ENCODE measurements at regions of chr1 and their contacts with region 1.

Region 1: GRCh38 chr1:153192697-153193096 is 10.5 kb upstream of the LELP1 start:
- DNase-seq: peak; percentile 57
- H3K27ac ChIP-seq: no peak overlapping the region
- CTCF ChIP-seq: peak; percentile 54

Region 2: DNA sequence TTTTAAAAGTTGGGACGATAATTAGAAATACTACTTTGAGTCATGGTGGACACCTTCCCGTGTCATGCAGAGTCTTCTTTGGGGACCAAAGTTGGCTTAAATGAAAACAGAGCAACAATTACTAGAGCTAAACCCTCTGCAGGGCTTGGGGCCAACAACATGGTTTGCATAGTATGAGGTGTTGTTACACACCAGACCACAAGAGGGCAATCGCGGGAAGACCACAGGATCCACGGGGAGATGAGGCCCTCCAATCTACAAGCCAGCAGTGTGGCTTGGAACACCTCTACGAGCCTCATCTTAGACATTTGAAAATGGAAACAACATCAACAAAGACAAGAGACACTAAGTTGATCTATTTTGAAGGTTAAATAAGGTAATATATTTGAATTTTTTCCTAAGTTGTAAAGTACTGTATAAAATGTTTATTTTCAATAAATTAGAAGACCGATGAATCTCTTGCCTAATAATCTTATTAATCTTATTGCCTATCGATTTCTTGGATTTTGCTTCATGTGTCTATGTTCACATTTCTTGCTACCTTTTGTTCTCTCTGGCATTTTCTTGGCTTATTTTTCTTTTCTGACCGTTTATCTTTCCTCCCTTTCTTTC is 322.8 kb before region 1 on chr1:
- CTCF ChIA-PET with region 1: interaction called, 11 read pairs
- POLR2A ChIA-PET with region 1: no interaction called
- DNase-seq: peak; percentile 78
- H3K27ac ChIP-seq: no peak overlapping the region
- CTCF ChIP-seq: peak; percentile 86

Region 3: GRCh38 chr1:152926091-152926490 is 266.6 kb before region 1 on chr1:
- CTCF ChIA-PET with region 1: interaction called, 20 read pairs
- POLR2A ChIA-PET with region 1: no interaction called
- DNase-seq: peak; percentile 63
- H3K27ac ChIP-seq: no peak overlapping the region
- CTCF ChIP-seq: peak; percentile 33; the same call in 1 of the 2 replicates

Region 4: DNA sequence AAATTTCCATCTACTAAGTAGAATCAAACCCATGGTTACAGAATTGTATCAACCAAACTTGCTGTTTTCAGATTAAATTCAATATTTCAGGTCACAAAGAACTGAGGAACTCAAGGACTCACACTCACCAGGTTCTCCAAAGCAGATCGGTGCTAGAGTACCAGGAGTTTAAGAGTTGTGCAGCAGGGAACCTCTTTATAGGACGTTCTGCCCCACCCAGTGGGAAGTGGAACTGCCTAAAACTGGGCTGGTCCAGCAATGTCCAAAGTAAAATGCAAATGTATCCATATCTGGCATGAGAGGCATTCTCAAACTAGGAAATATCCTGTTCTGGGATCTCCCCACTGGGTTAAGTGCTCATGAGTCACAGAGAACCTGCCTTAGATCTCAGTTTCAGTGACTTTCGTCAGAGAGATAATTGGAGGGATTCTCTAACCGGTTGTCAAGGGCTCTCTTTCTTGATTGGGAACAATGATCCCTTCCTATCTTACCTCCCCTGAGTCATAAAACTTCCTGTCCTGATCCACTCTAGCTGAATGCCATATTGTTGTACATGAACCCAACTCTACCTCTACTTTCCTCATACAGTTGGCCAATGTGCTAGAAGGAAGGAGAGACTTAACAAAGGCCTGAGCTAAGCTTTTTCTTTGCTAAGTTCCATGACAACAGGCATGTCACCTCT is 151.6 kb before region 1 on chr1 and contains the start of gene SPRR2D:
- CTCF ChIA-PET with region 1: no interaction called
- POLR2A ChIA-PET with region 1: no interaction called
- DNase-seq: no peak
- H3K27ac ChIP-seq: no peak within 1 kb of the TSS
- CTCF ChIP-seq: no peak

Region 5: DNA sequence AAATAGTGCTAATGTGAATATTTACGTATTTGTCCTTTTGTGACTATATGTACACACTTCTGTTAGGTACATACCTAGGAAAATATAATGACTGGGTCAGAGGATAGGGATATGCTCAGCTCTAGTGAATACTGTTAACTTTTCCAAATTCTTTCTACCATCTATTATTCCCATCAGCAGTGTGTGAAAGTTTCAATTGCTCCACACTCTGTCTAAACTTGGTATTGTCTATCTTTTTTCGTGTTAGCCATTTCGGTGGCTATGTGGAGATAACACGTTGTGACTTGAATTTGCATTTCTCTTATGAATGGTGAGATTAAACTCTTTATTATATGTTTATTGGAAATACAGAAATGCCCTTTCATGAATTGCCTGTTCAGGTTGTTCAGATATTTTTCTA is 12.1 kb before region 1 on chr1:
- CTCF ChIA-PET with region 1: no interaction called
- POLR2A ChIA-PET with region 1: no interaction called
- DNase-seq: no peak
- H3K27ac ChIP-seq: no peak overlapping the region
- CTCF ChIP-seq: no peak